Upper lobe of right lung (tissue), 1 donor: ENCODE measurements at regions of chr4 and their contacts with region 1.

Region 1: GRCh38 chr4:122914292-122914904 is 8.0 kb downstream of the NUDT6 start:
- DNase-seq: no peak
- ATAC-seq: peak; percentile 76
- H3K4me3 ChIP-seq: no peak overlapping the region
- H3K27ac ChIP-seq: no peak overlapping the region
- H3K4me1 ChIP-seq: no peaks in the 10 kb centered on the region
- H3K27me3 ChIP-seq: no peaks in the 10 kb centered on the region
- CTCF ChIP-seq: peak; percentile 56

Region 2: GRCh38 chr4:122764821-122765215 is 149.6 kb before region 1 on chr4:
- intact Hi-C with region 1: loop called (anchors 10 kb)
- DNase-seq: no peak
- ATAC-seq: no peak
- H3K4me3 ChIP-seq: no peak overlapping the region
- H3K27ac ChIP-seq: no peak overlapping the region
- H3K4me1 ChIP-seq: peaks cover 4% of the 10 kb centered on the region
- H3K27me3 ChIP-seq: no peaks in the 10 kb centered on the region
- CTCF ChIP-seq: no peak

Region 3: GRCh38 chr4:123037804-123038203 is 123.4 kb after region 1 on chr4:
- intact Hi-C with region 1: no loop called
- DNase-seq: no peak
- ATAC-seq: no peak
- H3K4me3 ChIP-seq: no peak overlapping the region
- H3K27ac ChIP-seq: no peak overlapping the region
- H3K4me1 ChIP-seq: no peaks in the 10 kb centered on the region
- H3K27me3 ChIP-seq: no peaks in the 10 kb centered on the region
- CTCF ChIP-seq: no peak